ENCODE measurements at regions of chr3 and their contacts with region 1.

Region 1: DNA sequence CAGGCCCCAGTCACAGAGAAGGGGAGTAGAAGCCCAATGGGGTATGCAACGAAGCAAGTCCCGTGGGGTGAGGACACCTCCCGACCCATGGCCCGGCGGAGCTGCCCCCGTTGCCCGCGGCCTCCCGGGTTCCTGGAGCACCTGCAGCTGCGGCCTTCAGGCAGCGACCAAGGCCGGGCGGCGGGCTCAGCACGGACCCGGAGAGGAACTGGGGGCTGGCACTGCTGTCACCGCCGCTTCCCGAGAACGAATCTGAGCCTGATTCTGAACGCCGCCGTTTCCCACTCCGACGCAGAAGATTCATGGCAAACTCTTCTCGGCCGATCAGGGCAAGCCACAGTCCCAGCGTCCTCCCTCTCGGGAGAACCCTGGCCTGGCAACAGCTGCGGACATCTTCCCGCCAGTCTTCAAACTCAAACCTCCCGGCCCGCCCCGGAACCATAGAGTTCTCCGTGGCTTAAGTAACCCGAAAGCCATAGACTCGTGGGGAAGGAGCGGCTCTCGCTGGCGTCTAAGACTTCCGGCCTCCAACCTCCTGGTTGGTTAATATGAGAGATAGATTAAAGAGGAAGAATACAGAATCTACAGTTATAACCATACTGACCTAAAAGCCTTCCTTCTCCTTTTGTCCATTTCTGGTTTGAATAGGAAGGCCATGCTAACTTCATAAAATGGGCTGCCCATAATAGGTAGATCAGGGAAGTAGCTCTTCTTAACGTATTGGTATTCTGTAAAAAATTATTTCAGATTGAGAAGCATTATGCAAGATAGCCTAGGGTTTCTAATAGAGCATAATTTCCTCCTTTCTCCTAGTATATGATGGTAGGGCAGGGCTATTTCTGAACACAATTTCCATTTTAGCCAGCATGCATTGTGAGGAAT is at the start of gene POLQ:
- DNase-seq: peak; percentile 76 to 94 (median 84)
- ATAC-seq: peak; percentile 99
- H3K4me3 ChIP-seq: peak within 1 kb of the TSS; percentile 66
- H3K4me3 Mint-ChIP-seq: peak within 1 kb of the TSS; percentile 85
- H3K27ac ChIP-seq: peak within 1 kb of the TSS; percentile 49 to 59
- H3K27ac Mint-ChIP-seq: peak within 1 kb of the TSS; percentile 82
- H3K4me1 ChIP-seq: peaks cover 8% of the 10 kb centered on the region
- H3K4me1 Mint-ChIP-seq: peaks cover 14% of the 10 kb centered on the region
- H3K27me3 ChIP-seq: no peaks in the 10 kb centered on the region
- H3K27me3 Mint-ChIP-seq: no peaks in the 10 kb centered on the region
- CTCF ChIP-seq: no peak
- total RNA-seq, gene POLQ: 0.17 to 0.30 TPM

Region 2: DNA sequence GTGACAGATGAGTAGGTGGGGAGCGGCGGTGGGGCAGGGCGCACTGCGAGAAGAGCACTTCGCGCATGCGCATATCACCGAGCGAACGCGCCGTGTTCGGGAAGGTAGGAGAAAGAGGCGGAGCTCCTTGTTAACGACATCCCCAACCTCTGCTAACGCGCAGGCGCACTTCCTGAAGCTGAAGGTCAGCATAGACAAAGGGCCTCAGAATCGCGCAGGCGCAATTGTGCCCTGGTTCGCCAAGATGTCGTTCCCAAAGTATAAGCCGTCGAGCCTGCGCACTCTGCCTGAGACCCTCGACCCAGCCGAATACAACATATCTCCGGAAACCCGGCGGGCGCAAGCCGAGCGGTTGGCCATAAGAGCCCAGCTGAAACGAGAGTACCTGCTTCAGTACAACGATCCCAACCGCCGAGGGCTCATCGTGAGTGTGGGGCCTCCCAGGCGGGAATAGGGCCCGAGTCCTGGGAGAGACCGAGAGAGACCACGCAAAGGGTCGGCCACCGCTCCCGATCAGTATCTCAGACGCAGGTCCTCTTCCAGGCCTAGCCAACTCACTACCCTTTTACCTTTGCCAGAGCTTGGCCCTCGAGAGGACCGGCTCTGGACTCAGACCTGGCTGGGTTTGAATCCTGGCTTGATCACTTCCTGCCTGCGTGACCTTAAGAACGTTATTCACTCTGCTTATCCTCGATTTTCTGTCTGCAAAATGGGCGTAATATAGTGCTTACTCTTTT is 949.5 kb before region 1 on chr3 and contains the start of gene NDUFB4:
- CTCF ChIA-PET with region 1: no interaction called
- POLR2A ChIA-PET with region 1: no interaction called
- intact Hi-C with region 1: loop called in 1 of 2 experiments (anchors 10 kb)
- DNase-seq: peak; percentile 87 to 99 (median 94)
- ATAC-seq: peak; percentile 87
- H3K4me3 ChIP-seq: peak within 1 kb of the TSS; percentile 88
- H3K4me3 Mint-ChIP-seq: peak within 1 kb of the TSS; percentile 98
- H3K27ac ChIP-seq: peak within 1 kb of the TSS; percentile 94 to 95
- H3K27ac Mint-ChIP-seq: no peak within 1 kb of the TSS
- H3K4me1 ChIP-seq: peaks cover 14% of the 10 kb centered on the region
- H3K4me1 Mint-ChIP-seq: peaks cover 8% of the 10 kb centered on the region
- H3K27me3 ChIP-seq: no peaks in the 10 kb centered on the region
- H3K27me3 Mint-ChIP-seq: no peaks in the 10 kb centered on the region
- CTCF ChIP-seq: no peak
- total RNA-seq, gene NDUFB4: 81.3 to 84.0 TPM

Region 3: DNA sequence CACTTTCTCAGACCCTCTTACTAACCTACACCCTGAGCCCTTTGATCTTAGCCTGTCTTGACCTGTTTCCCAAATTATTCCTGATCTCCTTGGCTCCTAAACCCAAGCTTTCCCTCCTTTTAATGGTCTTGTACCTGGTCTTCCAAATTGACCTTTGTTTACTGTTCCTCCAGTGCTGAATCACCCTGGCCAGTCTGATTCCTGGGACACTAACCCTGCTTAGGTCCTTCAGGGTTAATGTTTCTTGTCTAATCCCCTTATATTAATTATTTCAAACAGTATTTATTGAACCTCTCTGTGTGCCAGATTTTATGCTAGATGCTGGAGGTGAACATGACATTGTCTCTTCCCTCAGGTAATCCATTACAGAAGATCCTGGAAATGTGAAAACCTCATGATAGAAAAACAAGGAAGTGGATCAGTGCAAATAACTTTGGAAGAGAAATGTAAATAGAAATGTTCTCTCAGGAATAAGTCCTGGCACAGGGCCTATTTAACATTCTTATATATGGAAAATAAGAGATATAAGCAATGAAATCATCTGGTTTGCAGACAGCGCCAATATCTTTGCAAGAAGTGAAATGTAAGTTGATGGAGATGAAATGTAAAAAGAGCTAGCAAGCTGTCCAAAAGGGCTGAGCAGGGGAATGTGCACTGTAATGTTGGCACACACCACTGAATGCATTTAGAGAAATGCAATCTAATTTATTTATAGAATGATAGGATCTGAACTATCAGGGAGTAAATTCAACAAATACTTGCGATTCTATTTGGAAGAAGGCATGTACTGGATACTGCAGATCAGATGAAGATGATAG is 884.5 kb before region 1 on chr3:
- CTCF ChIA-PET with region 1: no interaction called
- POLR2A ChIA-PET with region 1: no interaction called
- intact Hi-C with region 1: no loop called
- DNase-seq: no peak
- ATAC-seq: no peak
- H3K4me3 ChIP-seq: no peak overlapping the region
- H3K4me3 Mint-ChIP-seq: no peak overlapping the region
- H3K27ac ChIP-seq: no peak overlapping the region
- H3K27ac Mint-ChIP-seq: no peak overlapping the region
- H3K4me1 ChIP-seq: no peaks in the 10 kb centered on the region
- H3K4me1 Mint-ChIP-seq: no peaks in the 10 kb centered on the region
- H3K27me3 ChIP-seq: no peaks in the 10 kb centered on the region
- H3K27me3 Mint-ChIP-seq: peaks cover 8% of the 10 kb centered on the region
- CTCF ChIP-seq: no peak

Region 4: GRCh38 chr3:121529308-121529707 is 16.5 kb before region 1 on chr3:
- CTCF ChIA-PET with region 1: no interaction called
- POLR2A ChIA-PET with region 1: no interaction called
- intact Hi-C with region 1: no loop called
- DNase-seq: no peak
- ATAC-seq: no peak
- H3K4me3 ChIP-seq: no peak overlapping the region
- H3K4me3 Mint-ChIP-seq: no peak overlapping the region
- H3K27ac ChIP-seq: no peak overlapping the region
- H3K27ac Mint-ChIP-seq: no peak overlapping the region
- H3K4me1 ChIP-seq: no peaks in the 10 kb centered on the region
- H3K4me1 Mint-ChIP-seq: no peaks in the 10 kb centered on the region
- H3K27me3 ChIP-seq: no peaks in the 10 kb centered on the region
- H3K27me3 Mint-ChIP-seq: no peaks in the 10 kb centered on the region
- CTCF ChIP-seq: no peak

Region 5: DNA sequence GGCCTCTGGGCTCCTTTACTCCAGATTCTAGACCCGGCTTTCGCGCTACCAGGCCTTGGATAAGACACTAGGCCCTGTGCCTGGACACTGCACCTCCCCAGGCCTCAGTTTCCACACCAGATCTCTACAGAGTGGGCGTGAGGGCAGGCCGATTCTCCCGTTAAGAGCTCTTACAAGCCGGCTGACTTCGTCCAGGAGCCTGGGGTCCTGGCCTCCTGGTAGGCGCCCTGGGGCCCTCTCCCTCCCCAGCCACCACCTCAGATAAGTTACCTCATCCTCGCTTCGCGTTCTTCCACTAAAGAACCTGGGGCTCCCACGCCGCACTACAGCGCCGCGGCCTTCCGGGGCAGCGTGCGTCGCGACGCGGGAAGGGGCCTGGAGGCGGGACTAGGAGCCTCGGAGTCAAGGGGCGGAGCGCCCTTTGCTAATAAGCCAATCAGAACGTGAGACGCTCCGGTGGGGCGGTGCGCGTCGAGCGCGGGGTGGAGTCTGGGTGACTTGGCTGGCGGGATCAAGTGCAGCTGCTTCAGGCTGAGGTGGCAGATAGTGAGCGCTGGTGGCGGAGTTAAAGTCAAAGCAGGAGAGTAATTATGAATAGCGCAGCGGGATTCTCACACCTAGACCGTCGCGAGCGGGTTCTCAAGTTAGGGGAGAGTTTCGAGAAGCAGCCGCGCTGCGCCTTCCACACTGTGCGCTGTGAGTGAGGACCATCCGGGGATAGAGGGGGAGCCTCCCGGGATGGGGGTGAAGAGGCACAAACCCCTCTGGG is 289.1 kb after region 1 on chr3 and contains the starts of genes EAF2 and IQCB1:
- CTCF ChIA-PET with region 1: no interaction called
- POLR2A ChIA-PET with region 1: no interaction called
- intact Hi-C with region 1: loop called in 1 of 2 experiments (anchors 5 kb)
- DNase-seq: peak; percentile 90 to 98 (median 95)
- ATAC-seq: peak; percentile 95
- H3K4me3 ChIP-seq: peak within 1 kb of the TSS; percentile 70
- H3K4me3 Mint-ChIP-seq: peak within 1 kb of the TSS; percentile 92
- H3K27ac ChIP-seq: peak within 1 kb of the TSS; percentile 83 to 84
- H3K27ac Mint-ChIP-seq: peak within 1 kb of the TSS; percentile 79
- H3K4me1 ChIP-seq: peaks cover 25% of the 10 kb centered on the region
- H3K4me1 Mint-ChIP-seq: peaks cover 61% of the 10 kb centered on the region
- H3K27me3 ChIP-seq: no peaks in the 10 kb centered on the region
- H3K27me3 Mint-ChIP-seq: no peaks in the 10 kb centered on the region
- CTCF ChIP-seq: no peak
- total RNA-seq, gene EAF2: 3.7 to 4.4 TPM
- total RNA-seq, gene IQCB1: 39.6 to 41.3 TPM

Region 6: GRCh38 chr3:122299872-122300460 is 754.2 kb after region 1 on chr3:
- CTCF ChIA-PET with region 1: interaction called, 4 read pairs
- POLR2A ChIA-PET with region 1: interaction called, 3 read pairs
- intact Hi-C with region 1: loop called (anchors 1 to 2 kb)
- DNase-seq: peak in 9 of 14 experiments; percentile 9 to 73 (median 30)
- ATAC-seq: peak; percentile 49
- H3K4me3 ChIP-seq: no peak overlapping the region
- H3K4me3 Mint-ChIP-seq: no peak overlapping the region
- H3K27ac ChIP-seq: no peak overlapping the region
- H3K27ac Mint-ChIP-seq: no peak overlapping the region
- H3K4me1 ChIP-seq: peaks cover 8% of the 10 kb centered on the region
- H3K4me1 Mint-ChIP-seq: peaks cover 8% of the 10 kb centered on the region
- H3K27me3 ChIP-seq: no peaks in the 10 kb centered on the region
- H3K27me3 Mint-ChIP-seq: no peaks in the 10 kb centered on the region
- CTCF ChIP-seq: peak; percentile 55

Region 7: GRCh38 chr3:122679085-122679881 is 1133.5 kb after region 1 on chr3:
- CTCF ChIA-PET with region 1: interaction called, 5 read pairs
- POLR2A ChIA-PET with region 1: interaction called, 3 read pairs
- intact Hi-C with region 1: loop called (anchors 1 to 5 kb)
- DNase-seq: peak; percentile 71 to 92 (median 78)
- ATAC-seq: peak; percentile 68
- H3K4me3 ChIP-seq: peak overlapping the region; percentile 93
- H3K4me3 Mint-ChIP-seq: peak overlapping the region; percentile 93
- H3K27ac ChIP-seq: peak overlapping the region; percentile 88 to 91
- H3K27ac Mint-ChIP-seq: peak overlapping the region; percentile 96
- H3K4me1 ChIP-seq: peaks cover 46% of the 10 kb centered on the region
- H3K4me1 Mint-ChIP-seq: peaks cover 54% of the 10 kb centered on the region
- H3K27me3 ChIP-seq: no peaks in the 10 kb centered on the region
- H3K27me3 Mint-ChIP-seq: no peaks in the 10 kb centered on the region
- CTCF ChIP-seq: peak; percentile 83

Region 8: DNA sequence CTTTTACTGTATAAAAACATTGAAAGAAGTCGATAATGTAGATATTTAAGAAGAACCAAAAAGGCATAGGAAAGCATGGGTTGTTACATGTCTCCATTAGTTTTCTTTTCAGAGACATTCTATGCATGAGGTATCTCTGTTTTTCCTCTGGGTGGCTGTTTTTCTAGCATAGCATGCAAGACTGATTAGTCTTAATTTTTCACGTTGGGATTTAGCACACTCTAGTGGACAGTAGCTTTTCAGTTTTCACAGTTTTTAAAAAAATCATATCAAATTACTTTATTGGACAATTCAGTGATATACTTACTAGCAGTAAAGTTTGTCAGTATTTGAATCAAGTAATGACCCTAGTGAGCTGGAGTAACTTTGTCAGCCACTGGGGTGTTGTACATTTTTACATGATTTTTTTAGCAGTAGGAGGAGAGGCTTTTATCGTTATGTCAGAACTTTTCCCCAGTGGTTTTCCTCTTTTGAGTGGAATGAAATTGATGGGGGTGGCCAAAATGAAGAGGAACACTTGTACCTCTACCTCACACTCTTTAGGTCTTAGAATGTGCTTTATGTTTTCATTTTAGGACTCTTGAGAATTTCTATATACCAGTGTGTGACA is 1713.1 kb after region 1 on chr3:
- CTCF ChIA-PET with region 1: no interaction called
- POLR2A ChIA-PET with region 1: no interaction called
- intact Hi-C with region 1: loop called in 1 of 2 experiments (anchors 5 kb)
- DNase-seq: peak in 3 of 14 experiments; percentile 37 to 48 (median 45)
- ATAC-seq: peak; percentile 77
- H3K4me3 ChIP-seq: no peak overlapping the region
- H3K4me3 Mint-ChIP-seq: no peak overlapping the region
- H3K27ac ChIP-seq: no peak overlapping the region
- H3K27ac Mint-ChIP-seq: no peak overlapping the region
- H3K4me1 ChIP-seq: no peaks in the 10 kb centered on the region
- H3K4me1 Mint-ChIP-seq: no peaks in the 10 kb centered on the region
- H3K27me3 ChIP-seq: no peaks in the 10 kb centered on the region
- H3K27me3 Mint-ChIP-seq: no peaks in the 10 kb centered on the region
- CTCF ChIP-seq: peak; percentile 44